ENCODE measurements at regions of chr13 and their contacts with region 1.

Region 1: DNA sequence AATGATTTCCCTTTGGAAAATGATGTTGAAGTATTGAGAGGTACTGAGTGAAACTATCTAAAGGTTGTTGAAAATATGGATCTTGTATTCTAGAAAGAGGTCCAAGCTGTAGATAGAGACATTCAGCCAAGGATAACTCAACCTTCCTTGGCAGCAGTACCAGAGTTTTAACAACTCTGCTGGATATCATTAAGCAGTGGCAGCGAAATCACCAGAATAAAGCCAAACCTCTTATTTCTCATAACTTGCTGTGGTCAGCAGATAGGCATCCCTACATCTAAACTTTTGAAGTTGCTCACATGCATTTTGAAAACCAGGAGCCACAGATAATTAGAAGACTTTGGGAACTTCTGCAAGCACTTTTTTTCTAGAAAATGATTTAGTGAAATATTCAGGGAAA is 559.8 kb downstream of the IRS2 start:
- DNase-seq: no peak
- H3K4me3 ChIP-seq: no peak overlapping the region
- H3K4me3 Mint-ChIP-seq: no peak overlapping the region
- H3K27ac Mint-ChIP-seq: no peak overlapping the region
- H3K4me1 ChIP-seq: no peaks in the 10 kb centered on the region
- H3K4me1 Mint-ChIP-seq: no peaks in the 10 kb centered on the region
- H3K27me3 ChIP-seq: no peaks in the 10 kb centered on the region
- H3K27me3 Mint-ChIP-seq: no peaks in the 10 kb centered on the region
- CTCF ChIP-seq: no peak

Region 2: GRCh38 chr13:108444448-108444847 is 782.2 kb before region 1 on chr13:
- CTCF ChIA-PET with region 1: no interaction called
- POLR2A ChIA-PET with region 1: no interaction called
- intact Hi-C with region 1: no loop called
- DNase-seq: no peak
- H3K4me3 ChIP-seq: no peak overlapping the region
- H3K4me3 Mint-ChIP-seq: no peak overlapping the region
- H3K27ac Mint-ChIP-seq: no peak overlapping the region
- H3K4me1 ChIP-seq: no peaks in the 10 kb centered on the region
- H3K4me1 Mint-ChIP-seq: no peaks in the 10 kb centered on the region
- H3K27me3 ChIP-seq: no peaks in the 10 kb centered on the region
- H3K27me3 Mint-ChIP-seq: peaks cover 4% of the 10 kb centered on the region
- CTCF ChIP-seq: no peak

Region 3: GRCh38 chr13:110433014-110433413 is 1206.4 kb after region 1 on chr13:
- CTCF ChIA-PET with region 1: no interaction called
- POLR2A ChIA-PET with region 1: no interaction called
- intact Hi-C with region 1: loop called (anchors 5 kb)
- DNase-seq: no peak
- H3K4me3 ChIP-seq: no peak overlapping the region
- H3K4me3 Mint-ChIP-seq: no peak overlapping the region
- H3K27ac Mint-ChIP-seq: no peak overlapping the region
- H3K4me1 ChIP-seq: peaks cover 5% of the 10 kb centered on the region; the same call in 1 of the 2 replicates
- H3K4me1 Mint-ChIP-seq: peaks cover 5% of the 10 kb centered on the region
- H3K27me3 ChIP-seq: no peaks in the 10 kb centered on the region
- H3K27me3 Mint-ChIP-seq: no peaks in the 10 kb centered on the region
- CTCF ChIP-seq: no peak

Measured in Caco-2 (cell line).